ENCODE measurements at regions of chr6 and their contacts with region 1.

Region 1: DNA sequence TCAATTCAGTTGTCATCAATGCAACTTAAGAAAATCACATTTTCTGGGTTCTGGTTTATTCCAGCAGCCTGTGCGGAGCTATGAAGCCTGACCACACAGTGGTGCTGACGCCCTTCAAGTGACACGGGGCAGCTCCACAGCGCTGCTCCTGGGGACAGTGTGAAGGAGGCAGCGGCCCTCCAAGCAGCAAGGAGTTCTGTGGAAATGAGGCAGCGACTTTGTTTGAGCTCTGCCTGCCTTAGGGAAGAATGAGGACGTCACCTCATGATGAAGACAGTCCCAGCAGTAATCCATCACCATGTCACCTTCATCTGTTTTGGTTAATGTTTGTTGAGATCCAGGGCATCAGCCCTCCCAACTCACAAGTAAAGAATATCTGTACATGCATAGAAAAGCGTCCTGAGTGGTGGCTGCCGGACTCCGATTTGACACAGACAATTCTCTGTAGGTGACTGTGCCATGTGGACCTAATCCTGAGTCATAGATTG is 168.5 kb upstream of the UST start:
- DNase-seq: peak; percentile 53 to 85 (median 78)
- H3K4me3 ChIP-seq: no peak overlapping the region
- H3K27ac ChIP-seq: peak overlapping the region in 1 of 59 donors; percentile 18
- H3K27me3 ChIP-seq: no peaks in the 10 kb centered on the region
- CTCF ChIP-seq: peak; percentile 37 to 98 (median 84)

Region 2: GRCh38 chr6:148629181-148629580 is 50.9 kb after region 1 on chr6:
- intact Hi-C with region 1: no loop called
- DNase-seq: no peak
- H3K4me3 ChIP-seq: no peak overlapping the region
- H3K27ac ChIP-seq: no peak overlapping the region
- H3K27me3 ChIP-seq: no peaks in the 10 kb centered on the region
- CTCF ChIP-seq: no peak

Region 3: GRCh38 chr6:148677594-148678476 is 99.5 kb after region 1 on chr6:
- intact Hi-C with region 1: no loop called
- DNase-seq: no peak
- H3K4me3 ChIP-seq: no peak overlapping the region
- H3K27ac ChIP-seq: no peak overlapping the region
- H3K27me3 ChIP-seq: no peaks in the 10 kb centered on the region
- CTCF ChIP-seq: no peak

Region 4: DNA sequence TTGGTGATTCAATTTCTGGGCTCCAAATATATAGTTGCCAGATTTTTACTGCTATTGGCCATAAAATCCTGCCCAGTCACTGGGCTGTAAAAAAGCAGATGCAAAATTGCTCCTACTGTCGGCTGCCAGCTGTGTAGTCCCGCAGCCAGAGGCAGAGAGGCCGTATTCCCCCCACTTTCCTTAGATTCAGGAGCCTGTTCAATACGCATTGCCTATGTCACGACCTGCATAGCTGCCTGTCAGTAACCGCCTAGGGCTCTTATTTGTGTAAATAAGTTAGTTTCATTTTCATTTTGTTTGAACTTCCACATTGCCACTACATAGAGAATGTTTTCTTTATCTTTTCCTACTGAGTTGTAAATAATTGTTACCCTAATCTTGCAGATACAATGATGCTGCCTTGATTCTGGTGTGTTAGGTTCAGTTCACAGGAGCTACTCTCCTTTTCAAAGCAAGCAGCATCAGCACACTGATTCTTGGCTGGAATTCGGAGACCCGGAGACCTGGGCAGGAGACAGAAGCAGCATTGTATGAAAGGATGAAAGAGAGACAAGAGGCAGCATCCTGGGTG is 122.5 kb after region 1 on chr6:
- intact Hi-C with region 1: loop called in 1 of 2 experiments (anchors 10 kb)
- DNase-seq: peak in 2 of 10 donors; percentile 12 to 14
- H3K4me3 ChIP-seq: peak overlapping the region; percentile 16 to 72 (median 53)
- H3K27ac ChIP-seq: peak overlapping the region in 35 of 59 donors; percentile 9 to 76 (median 49)
- H3K27me3 ChIP-seq: peaks cover 0 to 2% (median 0%) of the 10 kb centered on the region in 45 donors
- CTCF ChIP-seq: peak in 2 of 56 donors; percentile 0 to 12

Region 5: GRCh38 chr6:148746363-148747144 is 168.3 kb after region 1 on chr6 and contains the start of gene UST:
- intact Hi-C with region 1: loop called in 1 of 2 experiments (anchors 10 kb)
- DNase-seq: peak in 7 of 10 donors; percentile 34 to 59 (median 49)
- H3K4me3 ChIP-seq: peak within 1 kb of the TSS; percentile 41 to 89 (median 76)
- H3K27ac ChIP-seq: peak within 1 kb of the TSS in 55 of 59 donors; percentile 11 to 87 (median 68)
- H3K27me3 ChIP-seq: peaks cover 0 to 7% (median 0%) of the 10 kb centered on the region in 45 donors
- CTCF ChIP-seq: peak in 49 of 56 donors; percentile 14 to 63 (median 38)
- total RNA-seq, gene UST: 5.0 to 18.6 (median 9.4) TPM

Region 6: GRCh38 chr6:148947621-148948444 is 369.5 kb after region 1 on chr6:
- intact Hi-C with region 1: loop called (anchors 2 kb)
- DNase-seq: peak; percentile 66 to 93 (median 85)
- H3K4me3 ChIP-seq: no peak overlapping the region
- H3K27ac ChIP-seq: peak overlapping the region in 1 of 59 donors; percentile 3
- H3K27me3 ChIP-seq: no peaks in the 10 kb centered on the region
- CTCF ChIP-seq: peak; percentile 81 to 98 (median 94)

Measured in dorsolateral prefrontal cortex (tissue), 120 donors.